Activated CD4-positive, alpha-beta memory T cell treated with anti-CD3 and anti-CD28 coated beads for 36 hours (primary cell): ENCODE measurements at regions of chr12 and their contacts with region 1.

Region 1: DNA sequence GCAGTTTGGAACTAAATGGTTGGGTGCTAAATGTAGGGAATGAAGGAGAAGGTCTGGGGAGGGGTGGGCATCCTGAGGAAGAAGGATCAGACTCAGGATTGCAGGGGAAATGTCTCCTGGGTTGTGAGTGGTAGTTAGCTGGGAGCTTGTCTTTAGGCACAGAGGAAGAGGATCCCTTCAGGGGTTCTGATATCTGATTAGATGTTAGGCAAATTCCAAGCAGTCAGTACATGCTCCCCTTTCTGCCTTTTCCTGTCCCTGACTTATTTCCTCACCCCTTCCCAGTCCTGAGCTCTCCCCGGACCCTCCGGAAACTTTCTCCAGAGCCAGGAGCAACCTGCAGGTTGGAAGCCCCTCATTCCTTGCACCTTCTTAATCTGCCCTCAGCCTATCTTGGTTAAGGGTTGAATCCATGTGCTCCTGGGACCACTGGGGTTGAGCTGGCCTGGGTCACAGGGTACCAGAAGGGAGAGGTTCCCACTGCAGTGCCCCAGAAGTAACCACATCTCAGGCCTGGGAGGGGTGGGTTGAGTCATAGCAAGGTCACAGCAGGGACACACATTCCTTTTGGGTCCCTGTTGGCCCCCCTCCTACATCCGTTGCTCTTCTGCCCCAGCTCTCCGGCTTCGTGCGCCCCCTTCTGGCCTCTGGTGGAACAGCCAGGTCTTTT is 1.6 kb downstream of the IGFBP6 start:
- DNase-seq: peak; percentile 95
- H3K4me3 Mint-ChIP-seq: peak overlapping the region; percentile 13
- H3K27ac Mint-ChIP-seq: peak overlapping the region; percentile 56
- H3K4me1 Mint-ChIP-seq: peaks cover 41% of the 10 kb centered on the region
- H3K27me3 Mint-ChIP-seq: peaks cover 5% of the 10 kb centered on the region

Region 2: GRCh38 chr12:53047221-53048042 is 51.7 kb before region 1 on chr12:
- CTCF ChIA-PET with region 1: interaction called, 34 read pairs
- POLR2A ChIA-PET with region 1: no interaction called
- intact Hi-C with region 1: no loop called
- DNase-seq: peak; percentile 74
- H3K4me3 Mint-ChIP-seq: peak overlapping the region; percentile 32
- H3K27ac Mint-ChIP-seq: no peak overlapping the region
- H3K4me1 Mint-ChIP-seq: peaks cover 29% of the 10 kb centered on the region
- H3K27me3 Mint-ChIP-seq: no peaks in the 10 kb centered on the region

Region 3: GRCh38 chr12:53054112-53054833 is 44.8 kb before region 1 on chr12:
- CTCF ChIA-PET with region 1: interaction called, 34 read pairs
- POLR2A ChIA-PET with region 1: interaction called, 4 read pairs
- intact Hi-C with region 1: no loop called
- DNase-seq: peak; percentile 95
- H3K4me3 Mint-ChIP-seq: peak overlapping the region; percentile 95
- H3K27ac Mint-ChIP-seq: peak overlapping the region; percentile 85
- H3K4me1 Mint-ChIP-seq: peaks cover 8% of the 10 kb centered on the region
- H3K27me3 Mint-ChIP-seq: no peaks in the 10 kb centered on the region

Region 4: DNA sequence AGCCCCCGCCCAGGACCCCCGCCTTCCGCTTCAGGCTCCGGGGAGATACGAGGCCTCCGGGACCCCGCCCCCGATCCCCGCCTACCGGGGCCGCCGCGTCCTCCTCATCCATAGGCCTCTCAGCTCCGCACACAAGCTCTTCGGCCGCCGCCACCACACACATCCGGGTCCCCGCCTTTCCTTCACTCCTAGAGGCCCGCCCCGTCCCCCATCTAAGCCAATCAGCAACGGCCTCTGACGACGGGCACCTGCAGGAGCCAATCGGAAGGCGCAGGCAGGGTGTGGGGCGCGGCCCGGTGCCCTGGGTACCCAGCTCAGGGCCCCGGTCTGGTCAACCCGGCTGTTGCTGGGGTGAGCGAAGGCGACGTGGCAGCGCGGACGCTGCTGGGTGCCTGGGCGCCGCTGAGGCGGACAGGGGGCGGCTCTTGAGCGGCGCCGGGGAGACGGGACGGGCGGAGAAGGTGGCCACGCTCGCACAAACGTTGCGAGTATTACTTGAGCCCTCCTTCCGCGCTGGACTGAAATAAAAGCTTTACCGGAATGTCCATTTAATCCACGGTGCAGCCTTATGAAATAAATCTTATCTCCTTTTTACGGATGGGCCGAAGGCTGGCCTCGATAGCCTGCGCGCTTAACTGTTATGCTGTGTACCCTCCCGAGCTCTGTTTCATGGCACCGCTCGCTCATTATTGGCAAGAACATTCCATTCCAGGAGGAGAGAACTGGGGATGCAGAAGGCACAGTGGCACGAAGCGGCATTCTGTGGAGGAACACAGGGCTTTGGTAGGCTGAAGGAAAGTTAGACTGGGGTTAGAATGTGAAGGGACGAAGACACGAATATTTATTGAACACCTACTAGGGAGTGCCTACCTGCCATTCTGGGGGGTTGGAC is 19.6 kb before region 1 on chr12 and contains the start of gene SPRYD3:
- CTCF ChIA-PET with region 1: interaction called, 55 read pairs
- POLR2A ChIA-PET with region 1: interaction called, 16 read pairs
- intact Hi-C with region 1: loop called (anchors 1 kb)
- DNase-seq: peak; percentile 98
- H3K4me3 Mint-ChIP-seq: peak within 1 kb of the TSS; percentile 85
- H3K27ac Mint-ChIP-seq: peak within 1 kb of the TSS; percentile 81
- H3K4me1 Mint-ChIP-seq: peaks cover 32% of the 10 kb centered on the region
- H3K27me3 Mint-ChIP-seq: no peaks in the 10 kb centered on the region
- total RNA-seq, gene SPRYD3: 32.8 to 35.4 TPM

Region 5: DNA sequence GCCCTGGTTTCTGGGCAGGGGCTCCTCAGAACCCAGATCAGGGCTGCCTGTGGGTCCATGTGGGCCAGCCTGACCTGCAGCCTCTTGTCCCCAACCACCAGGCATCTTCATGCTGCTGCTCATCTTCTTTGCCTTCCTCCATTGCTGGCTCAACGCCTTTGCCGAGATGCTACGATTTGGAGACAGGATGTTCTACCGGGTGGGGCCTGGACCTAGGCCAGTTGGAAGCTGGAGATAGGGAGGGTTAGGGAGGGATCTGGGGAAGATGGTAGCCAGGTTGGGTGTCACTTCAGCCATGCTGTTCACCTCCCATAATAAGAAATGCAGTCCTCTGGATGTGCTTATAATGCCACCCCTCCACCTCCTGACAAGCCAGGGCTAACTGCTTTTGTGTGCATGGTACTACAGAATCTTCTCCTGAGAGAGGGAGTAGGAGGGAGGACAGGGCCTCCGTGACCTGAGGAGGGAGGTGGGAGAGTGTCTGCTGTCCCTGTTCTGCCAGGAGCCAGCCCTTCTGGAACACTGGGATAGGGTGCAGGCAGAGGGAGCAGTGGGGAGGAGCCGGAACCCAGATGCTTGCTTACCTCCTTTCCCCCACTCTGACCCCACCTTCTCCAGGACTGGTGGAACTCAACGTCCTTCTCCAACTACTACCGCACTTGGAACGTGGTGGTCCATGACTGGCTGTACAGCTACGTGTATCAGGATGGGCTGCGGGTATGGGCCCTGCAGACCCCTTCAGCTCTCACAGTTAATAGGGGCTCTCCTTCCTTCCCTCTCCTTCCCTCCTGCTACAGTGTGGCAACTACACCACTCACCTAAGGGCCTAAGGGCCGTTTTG is 21.8 kb after region 1 on chr12:
- CTCF ChIA-PET with region 1: no interaction called
- POLR2A ChIA-PET with region 1: no interaction called
- intact Hi-C with region 1: no loop called
- DNase-seq: no peak
- H3K4me3 Mint-ChIP-seq: no peak overlapping the region
- H3K27ac Mint-ChIP-seq: no peak overlapping the region
- H3K4me1 Mint-ChIP-seq: no peaks in the 10 kb centered on the region
- H3K27me3 Mint-ChIP-seq: no peaks in the 10 kb centered on the region

Region 6: DNA sequence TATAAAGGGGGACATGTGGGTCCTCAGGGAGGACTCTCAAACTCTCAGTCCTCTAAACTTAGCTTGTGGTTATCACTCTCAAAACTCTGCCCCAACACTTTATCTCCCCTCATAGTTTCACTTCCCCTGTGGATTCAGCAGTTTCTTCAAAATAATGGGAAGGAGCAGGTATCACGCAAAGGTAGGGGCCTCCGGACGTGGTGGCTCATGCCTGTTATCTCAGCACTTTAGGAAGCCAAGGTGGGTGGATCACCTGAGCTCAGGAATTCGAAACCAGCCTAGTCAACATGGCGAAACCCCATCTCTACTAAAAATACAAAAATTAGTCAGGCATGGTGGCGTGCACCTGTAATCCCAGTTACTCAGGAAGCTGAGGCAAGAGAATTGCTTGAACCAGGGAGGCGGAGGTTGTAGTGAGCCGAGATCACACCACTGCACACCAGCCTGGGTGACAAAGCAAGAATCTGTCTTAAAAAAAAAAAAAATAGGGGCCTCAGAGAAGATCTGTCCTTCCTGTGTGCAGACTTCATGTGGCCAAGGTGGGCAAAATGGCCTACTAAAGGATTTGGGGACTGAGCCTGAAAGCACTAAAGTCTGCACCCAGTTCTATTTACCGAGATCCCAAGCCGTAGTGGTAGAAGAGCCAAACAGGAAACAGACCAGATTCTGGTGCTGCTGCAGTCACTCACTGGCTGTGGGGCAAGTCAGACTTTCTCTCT is 101.5 kb after region 1 on chr12:
- CTCF ChIA-PET with region 1: interaction called, 5 read pairs
- POLR2A ChIA-PET with region 1: no interaction called
- intact Hi-C with region 1: loop called (anchors 5 kb)
- DNase-seq: peak; percentile 77
- H3K4me3 Mint-ChIP-seq: peak overlapping the region; percentile 45
- H3K27ac Mint-ChIP-seq: peak overlapping the region; percentile 88
- H3K4me1 Mint-ChIP-seq: peaks cover 72% of the 10 kb centered on the region
- H3K27me3 Mint-ChIP-seq: no peaks in the 10 kb centered on the region

Region 7: DNA sequence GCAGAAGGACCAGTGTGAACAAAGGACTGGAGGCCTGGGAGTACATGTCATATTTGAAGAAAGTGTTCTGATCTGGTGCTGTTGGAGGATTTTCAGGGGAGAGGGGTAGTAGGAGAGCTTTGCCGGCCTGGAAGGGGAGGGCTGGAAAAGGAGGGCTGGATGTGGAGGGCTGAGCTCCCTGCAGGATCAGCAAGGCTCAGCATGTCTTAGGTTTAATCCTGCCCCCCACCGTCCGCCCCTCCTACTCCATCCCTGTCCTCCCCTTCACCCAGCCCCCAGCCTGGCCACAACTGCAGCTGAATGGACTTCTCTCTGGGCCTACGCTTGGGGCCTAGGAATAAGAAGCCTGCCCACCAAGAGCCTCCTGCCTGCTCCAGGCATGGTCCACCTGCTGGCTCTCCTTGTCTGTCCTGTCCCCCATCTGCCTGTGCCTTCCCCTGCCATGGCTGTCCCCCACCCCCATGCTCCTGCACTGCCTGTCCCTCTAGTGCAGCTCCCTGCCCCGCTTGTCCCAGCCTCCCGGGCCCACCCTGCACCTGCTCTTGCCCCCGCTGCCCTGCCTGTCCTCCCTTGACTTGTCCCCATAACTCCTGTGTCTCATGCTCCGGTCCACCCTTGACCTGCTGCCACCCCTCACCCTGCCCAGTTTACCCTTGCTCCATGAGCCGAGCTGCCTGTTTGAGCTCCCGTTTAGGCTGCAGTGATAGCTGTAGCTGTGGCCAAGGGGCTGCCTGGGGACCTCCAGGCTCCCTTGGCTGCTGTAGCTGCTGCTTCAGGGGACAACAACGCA is 142.7 kb after region 1 on chr12:
- CTCF ChIA-PET with region 1: no interaction called
- POLR2A ChIA-PET with region 1: no interaction called
- intact Hi-C with region 1: no loop called
- DNase-seq: no peak
- H3K4me3 Mint-ChIP-seq: no peak overlapping the region
- H3K27ac Mint-ChIP-seq: no peak overlapping the region
- H3K4me1 Mint-ChIP-seq: peaks cover 8% of the 10 kb centered on the region
- H3K27me3 Mint-ChIP-seq: no peaks in the 10 kb centered on the region

Region 8: GRCh38 chr12:53645165-53645564 is 546.0 kb after region 1 on chr12:
- CTCF ChIA-PET with region 1: no interaction called
- POLR2A ChIA-PET with region 1: no interaction called
- intact Hi-C with region 1: no loop called
- DNase-seq: no peak
- H3K4me3 Mint-ChIP-seq: no peak overlapping the region
- H3K27ac Mint-ChIP-seq: no peak overlapping the region
- H3K4me1 Mint-ChIP-seq: no peaks in the 10 kb centered on the region
- H3K27me3 Mint-ChIP-seq: no peaks in the 10 kb centered on the region